Activated naive CD8-positive, alpha-beta T cell treated with anti-CD3 and anti-CD28 coated beads, Interleukin-2, amount 10 ng/mL, durations not matched to agents 7 days and 5 days (primary cell): ENCODE measurements at regions of chr7 and their contacts with region 1.

Region 1: GRCh38 chr7:112206238-112207044 is at the starts of genes DOCK4 and ZNF277:
- DNase-seq: peak; percentile 99
- ATAC-seq: peak; percentile 92
- H3K4me3 Mint-ChIP-seq: peak within 1 kb of the TSS; percentile 93
- H3K27ac Mint-ChIP-seq: peak within 1 kb of the TSS; percentile 89
- H3K4me1 Mint-ChIP-seq: peaks cover 20% of the 10 kb centered on the region
- H3K27me3 Mint-ChIP-seq: peaks cover 30% of the 10 kb centered on the region
- total RNA-seq, gene DOCK4: 1.4 to 1.7 TPM
- total RNA-seq, gene ZNF277: 21.2 to 21.6 TPM

Region 2: GRCh38 chr7:111855161-111855856 is 351.1 kb before region 1 on chr7:
- POLR2A ChIA-PET with region 1: no interaction called
- DNase-seq: no peak
- ATAC-seq: no peak
- H3K4me3 Mint-ChIP-seq: no peak overlapping the region
- H3K27ac Mint-ChIP-seq: no peak overlapping the region
- H3K4me1 Mint-ChIP-seq: peaks cover 5% of the 10 kb centered on the region
- H3K27me3 Mint-ChIP-seq: peaks cover 2% of the 10 kb centered on the region

Region 3: GRCh38 chr7:112192236-112193154 is 13.9 kb before region 1 on chr7:
- POLR2A ChIA-PET with region 1: no interaction called
- DNase-seq: no peak
- ATAC-seq: no peak
- H3K4me3 Mint-ChIP-seq: no peak overlapping the region
- H3K27ac Mint-ChIP-seq: no peak overlapping the region
- H3K4me1 Mint-ChIP-seq: no peaks in the 10 kb centered on the region
- H3K27me3 Mint-ChIP-seq: peaks cover 37% of the 10 kb centered on the region

Region 4: DNA sequence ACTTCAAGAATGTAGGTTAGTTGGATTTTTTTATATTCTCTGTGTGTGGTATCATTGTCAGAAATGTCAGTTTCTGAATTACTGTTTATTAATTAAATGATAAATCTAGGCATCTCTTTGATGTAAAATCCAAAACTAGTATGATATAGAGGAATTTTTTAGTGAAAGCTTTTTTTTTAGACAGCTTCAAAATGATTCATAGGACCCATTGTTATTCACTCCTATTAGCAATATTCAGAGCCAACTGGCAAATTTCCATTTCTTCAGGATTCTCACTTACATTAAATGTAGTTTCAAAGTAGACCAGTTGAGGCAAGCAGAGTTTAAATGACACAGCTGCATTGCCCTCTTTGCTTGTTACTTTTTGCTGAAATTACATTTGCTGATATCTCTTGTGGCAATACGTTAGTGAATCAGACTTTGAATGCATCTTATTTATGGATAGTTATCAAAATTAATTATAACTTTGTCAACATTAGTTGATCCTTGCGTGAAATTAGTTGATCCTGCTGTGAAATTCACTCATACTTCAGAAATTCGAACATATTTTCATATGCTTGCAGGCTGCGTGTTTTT is 20.3 kb after region 1 on chr7:
- POLR2A ChIA-PET with region 1: no interaction called
- DNase-seq: no peak
- ATAC-seq: no peak
- H3K4me3 Mint-ChIP-seq: no peak overlapping the region
- H3K27ac Mint-ChIP-seq: no peak overlapping the region
- H3K4me1 Mint-ChIP-seq: no peaks in the 10 kb centered on the region
- H3K27me3 Mint-ChIP-seq: no peaks in the 10 kb centered on the region

Region 5: GRCh38 chr7:112449902-112450806 is 243.7 kb after region 1 on chr7 and contains the start of gene IFRD1:
- POLR2A ChIA-PET with region 1: interaction called, 21 read pairs
- DNase-seq: peak; percentile 98
- ATAC-seq: peak; percentile 80
- H3K4me3 Mint-ChIP-seq: peak within 1 kb of the TSS; percentile 93
- H3K27ac Mint-ChIP-seq: peak within 1 kb of the TSS; percentile 95
- H3K4me1 Mint-ChIP-seq: peaks cover 33% of the 10 kb centered on the region
- H3K27me3 Mint-ChIP-seq: no peaks in the 10 kb centered on the region
- total RNA-seq, gene IFRD1: 38.7 to 39.2 TPM